ENCODE measurements at regions of chr2 and their contacts with region 1.

Region 1: GRCh38 chr2:25201265-25201664 is 32.9 kb upstream of the POMC start:
- DNase-seq: no peak
- H3K4me3 Mint-ChIP-seq: no peak overlapping the region
- H3K27ac Mint-ChIP-seq: no peak overlapping the region
- H3K4me1 Mint-ChIP-seq: peaks cover 6% of the 10 kb centered on the region
- H3K27me3 Mint-ChIP-seq: no peaks in the 10 kb centered on the region

Region 2: DNA sequence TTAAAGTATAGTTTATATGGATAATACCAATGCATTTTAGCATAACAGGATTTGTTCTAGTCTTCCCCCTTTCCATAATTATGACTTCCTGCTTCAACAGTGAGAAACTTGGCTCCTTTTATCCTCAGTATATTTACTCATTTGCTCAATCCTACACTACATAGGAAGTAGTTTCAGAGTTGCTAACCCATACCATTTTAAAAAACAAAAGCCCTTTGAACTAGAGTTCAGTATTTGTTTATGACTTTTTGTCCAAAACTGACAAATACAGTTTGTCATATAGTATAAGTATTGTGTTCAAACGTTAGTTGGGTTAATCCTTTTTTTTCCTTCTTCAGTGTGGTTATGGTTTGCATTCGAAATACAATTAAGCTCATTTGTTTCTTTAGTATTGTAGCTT is 223.6 kb before region 1 on chr2:
- CTCF ChIA-PET with region 1: interaction called, 33 read pairs
- POLR2A ChIA-PET with region 1: no interaction called
- intact Hi-C with region 1: loop called (anchors 1 kb)
- DNase-seq: no peak
- H3K4me3 Mint-ChIP-seq: no peak overlapping the region
- H3K27ac Mint-ChIP-seq: no peak overlapping the region
- H3K4me1 Mint-ChIP-seq: peaks cover 3% of the 10 kb centered on the region
- H3K27me3 Mint-ChIP-seq: no peaks in the 10 kb centered on the region

Region 3: DNA sequence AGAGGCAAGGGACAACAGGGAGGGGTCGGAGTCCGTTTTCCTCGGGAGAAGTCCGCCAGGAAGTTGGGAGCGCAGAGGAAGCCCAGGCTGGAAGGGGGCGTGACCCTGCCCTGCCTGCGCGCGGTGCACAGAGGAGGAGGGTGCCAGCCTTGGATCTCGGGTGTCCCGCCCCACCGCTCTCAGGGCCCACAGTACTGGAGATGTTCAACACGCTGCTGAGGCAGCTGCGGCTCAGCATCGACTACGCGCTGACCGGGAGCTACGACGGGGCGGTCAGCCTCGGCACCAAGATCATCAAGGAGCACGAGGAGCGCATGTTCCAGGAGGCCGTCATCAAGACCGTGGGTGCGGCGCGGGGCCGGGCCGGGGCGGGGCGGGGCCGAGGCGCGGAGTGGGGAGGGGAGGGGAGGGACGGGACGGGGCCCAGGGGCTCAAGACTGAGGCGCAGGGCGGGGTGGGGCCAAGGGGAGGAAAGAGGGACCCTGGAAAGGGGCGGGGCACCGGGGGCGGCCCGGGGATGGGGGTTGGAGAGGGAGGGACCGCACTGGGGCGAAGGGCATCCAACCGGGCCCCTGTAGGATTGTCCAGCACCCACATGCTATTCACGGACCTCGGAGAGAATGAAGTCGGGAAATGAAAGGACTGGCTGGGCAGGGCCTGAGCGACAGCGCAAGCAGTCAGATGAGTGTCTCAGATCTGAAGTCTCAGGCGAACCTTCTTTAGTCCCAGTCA is 69.5 kb before region 1 on chr2:
- CTCF ChIA-PET with region 1: interaction called, 9 read pairs
- POLR2A ChIA-PET with region 1: no interaction called
- intact Hi-C with region 1: loop called (anchors 2 kb)
- DNase-seq: peak; percentile 23
- H3K4me3 Mint-ChIP-seq: peak overlapping the region; percentile 48
- H3K27ac Mint-ChIP-seq: no peak overlapping the region
- H3K4me1 Mint-ChIP-seq: peaks cover 12% of the 10 kb centered on the region
- H3K27me3 Mint-ChIP-seq: peaks cover 50% of the 10 kb centered on the region